ENCODE measurements at regions of chr1 and their contacts with region 1.

Region 1: DNA sequence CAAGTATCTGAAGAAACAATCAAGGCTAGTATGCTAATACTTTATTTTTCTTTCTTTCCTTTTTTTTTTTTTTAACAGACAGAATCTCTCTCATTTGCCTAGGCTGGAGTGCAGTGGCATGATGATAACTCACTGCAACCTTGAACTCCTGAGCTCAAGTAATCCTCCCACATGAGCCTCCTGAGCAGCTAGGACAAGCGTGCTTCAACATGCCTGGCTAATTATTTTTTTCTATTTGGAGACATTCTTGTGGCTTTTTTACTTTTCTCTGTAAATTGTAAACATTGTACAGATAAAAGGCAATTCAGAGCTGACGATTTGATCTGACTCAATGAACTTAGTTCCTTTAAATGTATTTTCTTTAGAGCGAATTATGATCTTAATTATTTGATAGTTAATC is 41.4 kb downstream of the CCDC18 start:
- DNase-seq: no peak
- H3K4me3 ChIP-seq: no peak overlapping the region
- H3K27ac ChIP-seq: no peak overlapping the region
- H3K4me1 ChIP-seq: peaks cover 4% of the 10 kb centered on the region
- CTCF ChIP-seq: no peak

Region 2: DNA sequence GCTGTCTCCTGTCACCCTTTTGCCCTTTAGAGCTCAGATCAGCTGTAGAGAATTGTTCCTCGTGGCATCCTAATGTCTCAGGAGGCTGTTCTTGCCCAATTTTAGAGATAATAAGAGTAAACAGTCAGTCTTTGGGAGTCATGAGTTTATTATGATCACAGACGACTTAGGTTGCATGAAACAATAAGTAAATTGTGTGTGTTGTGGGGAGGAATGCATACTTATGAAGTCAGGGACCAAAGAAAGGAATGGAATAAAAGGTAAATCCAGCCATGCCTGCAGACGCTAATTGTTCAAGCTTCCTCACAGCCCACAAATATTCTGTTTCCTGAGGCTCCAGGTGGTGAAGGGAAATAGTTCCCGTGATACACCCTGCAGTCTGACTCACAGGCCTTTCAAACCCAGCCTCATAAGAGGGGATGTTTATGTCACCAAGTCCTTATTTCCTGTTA is 1191.2 kb before region 1 on chr1:
- CTCF ChIA-PET with region 1: no interaction called
- POLR2A ChIA-PET with region 1: no interaction called
- intact Hi-C with region 1: no loop called
- DNase-seq: no peak
- H3K4me3 ChIP-seq: no peak overlapping the region
- H3K27ac ChIP-seq: no peak overlapping the region
- H3K4me1 ChIP-seq: no peaks in the 10 kb centered on the region
- CTCF ChIP-seq: no peak

Region 3: GRCh38 chr1:93194231-93194990 is 27.5 kb before region 1 on chr1:
- CTCF ChIA-PET with region 1: no interaction called
- POLR2A ChIA-PET with region 1: interaction called, 3 read pairs
- intact Hi-C with region 1: loop called (anchors 5 kb)
- DNase-seq: no peak
- H3K4me3 ChIP-seq: no peak overlapping the region
- H3K27ac ChIP-seq: no peak overlapping the region
- H3K4me1 ChIP-seq: no peaks in the 10 kb centered on the region
- CTCF ChIP-seq: no peak

Region 4: GRCh38 chr1:93255222-93256079 is 33.5 kb after region 1 on chr1:
- CTCF ChIA-PET with region 1: no interaction called
- POLR2A ChIA-PET with region 1: interaction called, 4 read pairs
- intact Hi-C with region 1: loop called (anchors 5 kb)
- DNase-seq: no peak
- H3K4me3 ChIP-seq: no peak overlapping the region
- H3K27ac ChIP-seq: no peak overlapping the region
- H3K4me1 ChIP-seq: peaks cover 22% of the 10 kb centered on the region
- CTCF ChIP-seq: no peak